SK-N-SH (cell line): ENCODE measurements at regions of chrX and their contacts with region 1.

Region 1: DNA sequence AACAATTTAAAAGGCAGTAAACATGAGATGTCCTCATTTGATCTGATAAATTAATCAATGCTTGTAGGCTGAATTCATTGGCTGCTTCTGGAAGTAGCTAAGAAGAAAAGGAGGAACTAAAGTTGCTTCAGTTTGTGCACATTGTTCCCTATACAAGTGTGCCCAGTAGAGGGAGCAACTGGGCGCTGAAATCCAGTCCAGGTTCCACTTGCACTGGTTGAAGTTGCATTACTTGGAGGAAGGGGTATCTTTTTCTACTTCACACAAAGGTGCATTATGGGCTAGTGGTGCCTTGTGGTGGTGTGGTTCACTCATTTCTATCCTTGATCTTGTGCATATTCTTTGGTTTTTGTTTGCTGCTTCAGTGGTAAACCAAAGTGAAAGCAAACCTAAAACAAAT is 67.9 kb upstream of the SOX3 start:
- DNase-seq: peak; percentile 21
- H3K4me3 ChIP-seq: peak overlapping the region in 1 of 2 experiments; percentile 11; a peak in 1 of 4 replicates
- H3K27ac ChIP-seq: no peak overlapping the region
- H3K4me1 ChIP-seq: no peaks in the 10 kb centered on the region
- H3K27me3 ChIP-seq: no peaks in the 10 kb centered on the region; the same call in 1 of the 2 replicates
- CTCF ChIP-seq: peak; percentile 82
- EP300 ChIP-seq: no peak
- RAD21 ChIP-seq: peak; percentile 53

Region 2: DNA sequence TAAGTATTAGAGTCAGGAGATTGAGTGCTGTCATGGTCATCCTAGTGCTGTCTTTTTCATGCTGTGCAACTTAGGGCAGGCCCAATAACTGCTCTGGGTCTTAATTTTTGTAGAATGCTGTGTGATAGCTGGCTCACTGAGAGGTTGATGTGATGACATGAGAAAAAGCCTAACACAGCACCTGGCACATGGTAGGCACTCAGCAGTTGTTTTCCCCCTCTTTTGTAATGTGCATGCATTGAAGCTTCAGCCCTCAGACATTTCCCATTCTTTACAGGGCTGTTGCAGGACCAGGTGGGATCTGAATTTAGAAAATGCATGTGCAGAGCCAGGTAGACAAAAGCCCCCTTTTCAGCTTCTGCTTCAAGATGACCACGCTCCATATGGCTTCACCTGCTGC is 23.7 kb before region 1 on chrX:
- CTCF ChIA-PET with region 1: interaction called, 17 read pairs
- POLR2A ChIA-PET with region 1: no interaction called
- DNase-seq: no peak
- H3K4me3 ChIP-seq: no peak overlapping the region
- H3K27ac ChIP-seq: no peak overlapping the region
- H3K4me1 ChIP-seq: no peaks in the 10 kb centered on the region
- H3K27me3 ChIP-seq: no peaks in the 10 kb centered on the region; the same call in none of the 2 replicates
- CTCF ChIP-seq: no peak
- EP300 ChIP-seq: no peak
- RAD21 ChIP-seq: no peak